ENCODE measurements at regions of chr6 and their contacts with region 1.

Region 1: GRCh38 chr6:5143634-5144311 is 58.6 kb downstream of the PPP1R3G start:
- DNase-seq: peak; percentile 94
- H3K4me3 Mint-ChIP-seq: no peak overlapping the region
- H3K27ac Mint-ChIP-seq: no peak overlapping the region
- H3K4me1 Mint-ChIP-seq: peaks cover 4% of the 10 kb centered on the region
- H3K27me3 Mint-ChIP-seq: no peaks in the 10 kb centered on the region

Region 2: DNA sequence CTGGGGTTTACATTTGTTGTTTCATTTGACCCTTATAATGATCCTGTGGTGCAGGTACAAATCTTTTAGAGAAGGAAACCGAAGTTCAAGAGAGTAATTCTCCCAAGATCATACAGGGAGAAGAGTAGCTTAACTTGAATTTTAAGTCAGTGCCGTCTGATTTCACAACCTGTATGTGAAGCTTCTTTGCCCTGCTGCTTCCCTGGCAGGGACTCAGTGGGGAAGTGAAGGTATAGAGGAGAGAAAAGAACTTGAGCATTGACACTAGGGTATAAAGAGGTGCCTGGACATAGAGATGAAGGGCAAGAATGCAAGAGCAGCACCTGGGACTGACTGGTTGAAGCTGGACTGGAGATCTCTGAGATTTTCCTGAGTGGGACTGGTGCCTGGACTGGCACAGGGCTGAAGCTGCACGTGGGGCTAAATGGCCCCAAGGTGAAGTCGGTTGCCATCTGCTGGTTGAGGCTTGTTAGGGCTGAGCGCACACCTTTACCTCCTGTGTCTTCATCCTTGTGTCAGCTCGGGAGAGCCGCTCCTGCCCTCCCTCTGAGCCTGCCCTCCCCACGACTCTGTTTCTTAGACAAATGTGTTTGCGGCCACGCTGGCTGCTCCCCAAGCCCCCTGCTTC is 159.3 kb after region 1 on chr6:
- intact Hi-C with region 1: loop called (anchors 1 kb)
- DNase-seq: peak; percentile 85
- H3K4me3 Mint-ChIP-seq: peak overlapping the region; percentile 36
- H3K27ac Mint-ChIP-seq: no peak overlapping the region
- H3K4me1 Mint-ChIP-seq: peaks cover 21% of the 10 kb centered on the region
- H3K27me3 Mint-ChIP-seq: no peaks in the 10 kb centered on the region

Region 3: GRCh38 chr6:5379647-5380242 is 236.0 kb after region 1 on chr6:
- intact Hi-C with region 1: loop called (anchors 1 kb)
- DNase-seq: peak; percentile 79
- H3K4me3 Mint-ChIP-seq: no peak overlapping the region
- H3K27ac Mint-ChIP-seq: no peak overlapping the region
- H3K4me1 Mint-ChIP-seq: no peaks in the 10 kb centered on the region
- H3K27me3 Mint-ChIP-seq: no peaks in the 10 kb centered on the region

Region 4: DNA sequence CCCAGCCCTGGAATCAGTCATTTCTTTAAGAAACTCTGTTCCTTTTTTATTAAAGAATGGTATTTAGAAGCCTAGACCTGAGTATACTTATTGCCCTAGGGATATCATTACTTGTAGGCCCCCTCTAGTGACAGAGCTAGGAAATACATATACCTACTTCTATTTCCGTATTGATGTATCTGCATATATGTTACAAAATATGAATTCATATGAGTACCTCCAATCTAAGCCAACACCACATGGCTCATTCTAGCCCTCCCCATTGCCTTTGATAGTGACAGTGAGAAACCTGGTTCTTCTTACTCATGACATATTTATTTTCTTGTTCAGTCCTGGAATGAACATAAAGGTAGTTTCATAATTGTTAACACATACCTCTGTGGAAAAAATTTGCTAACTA is 254.8 kb after region 1 on chr6:
- intact Hi-C with region 1: loop called (anchors 1 kb)
- DNase-seq: peak; percentile 64
- H3K4me3 Mint-ChIP-seq: no peak overlapping the region
- H3K27ac Mint-ChIP-seq: no peak overlapping the region
- H3K4me1 Mint-ChIP-seq: peaks cover 6% of the 10 kb centered on the region
- H3K27me3 Mint-ChIP-seq: no peaks in the 10 kb centered on the region